ENCODE measurements at regions of chr11 and their contacts with region 1.

Region 1: DNA sequence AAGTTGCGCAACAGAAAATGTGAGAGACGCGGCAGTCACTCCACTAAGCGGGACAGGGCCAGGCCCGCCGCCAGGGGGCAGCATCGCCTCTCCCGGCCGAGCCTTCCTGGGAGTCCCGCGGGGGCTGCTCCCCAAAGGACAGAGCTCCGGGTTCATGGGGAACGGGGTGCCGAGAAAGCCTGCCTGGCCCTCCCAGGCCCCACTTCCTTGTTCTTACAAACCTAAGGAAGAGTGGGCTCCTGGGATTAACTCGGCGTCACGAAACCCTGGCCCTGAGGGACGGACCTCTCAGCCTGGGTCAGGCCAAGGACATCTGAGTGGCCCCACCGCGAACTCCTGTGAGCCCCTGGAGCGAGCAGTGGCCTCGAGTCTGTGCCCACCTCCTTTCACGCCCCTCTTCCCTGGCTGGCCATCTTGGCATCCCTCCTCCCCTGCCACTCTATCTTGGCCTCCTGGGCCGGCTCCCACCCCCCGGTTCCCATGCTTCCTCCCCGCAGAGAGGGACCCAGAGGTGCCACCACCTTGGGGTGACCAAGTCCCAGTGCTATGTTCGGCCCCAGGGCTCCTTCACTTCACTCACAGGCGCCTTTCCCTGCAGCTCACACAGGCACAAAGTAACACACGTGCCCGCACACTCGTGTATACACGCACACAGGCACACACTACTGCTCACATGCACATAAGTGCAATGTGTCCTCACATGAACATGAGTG is 99.9 kb upstream of the FGF3 start:
- DNase-seq: peak; percentile 41
- H3K4me3 ChIP-seq: no peak overlapping the region
- H3K27ac ChIP-seq: no peak overlapping the region
- H3K4me1 ChIP-seq: peaks cover 11% of the 10 kb centered on the region
- H3K27me3 ChIP-seq: peaks cover 1 to 10% of the 10 kb centered on the region in 2 experiments
- CTCF ChIP-seq: peak; percentile 91 to 97
- POLR2A ChIP-seq: no peak

Region 2: DNA sequence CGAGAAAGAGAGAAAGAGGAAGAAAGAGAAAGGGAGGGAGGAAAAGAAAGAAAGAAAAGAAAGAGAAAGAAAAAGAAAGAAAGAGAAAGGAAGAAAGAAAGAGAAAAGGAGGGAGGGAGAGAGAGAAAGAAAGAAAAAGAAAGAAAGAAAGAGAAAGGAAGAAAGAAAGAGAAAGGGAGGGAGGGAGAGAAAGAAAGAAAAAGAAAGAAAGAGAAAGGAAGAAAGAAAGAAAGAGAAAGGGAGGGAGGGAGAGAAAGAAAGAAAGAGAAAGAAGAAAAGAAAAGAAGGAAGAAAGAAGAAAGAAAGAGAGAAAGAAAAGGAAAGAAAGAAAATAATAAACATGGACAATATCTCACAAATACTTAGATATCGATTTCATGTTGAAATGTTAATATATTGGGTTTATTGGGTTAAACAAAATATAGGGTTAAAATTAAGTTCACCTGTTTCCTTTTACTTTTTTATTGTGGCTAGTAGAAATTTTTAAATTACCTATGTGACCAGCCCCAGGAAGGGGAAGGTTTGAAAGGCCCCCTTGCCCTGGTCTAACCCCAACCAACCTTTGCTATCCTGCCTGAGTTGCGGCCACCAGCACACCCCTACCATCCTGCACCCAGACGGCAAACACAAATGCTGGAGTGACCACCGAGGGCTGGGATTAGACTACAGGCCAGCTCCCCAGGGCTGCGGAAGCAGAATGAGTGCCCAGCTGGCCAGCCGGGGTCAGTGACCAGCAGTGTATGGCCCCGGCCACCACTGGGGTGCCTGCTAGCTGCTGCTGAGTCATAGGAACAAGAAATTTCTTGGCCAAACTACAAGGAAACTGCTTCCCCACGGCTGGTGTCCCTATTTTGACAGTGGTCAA is 18.9 kb before region 1 on chr11:
- CTCF ChIA-PET with region 1: interaction called, 35 read pairs
- POLR2A ChIA-PET with region 1: no interaction called
- dilution Hi-C with region 1: no loop called
- intact Hi-C with region 1: no loop called
- DNase-seq: peak; percentile 67
- H3K4me3 ChIP-seq: no peak overlapping the region
- H3K27ac ChIP-seq: no peak overlapping the region
- H3K4me1 ChIP-seq: peaks cover 13% of the 10 kb centered on the region
- H3K27me3 ChIP-seq: peaks cover 0 to 7% of the 10 kb centered on the region in 2 experiments
- CTCF ChIP-seq: no peak
- POLR2A ChIP-seq: no peak

Region 3: GRCh38 chr11:69972351-69972802 is 53.3 kb after region 1 on chr11:
- CTCF ChIA-PET with region 1: no interaction called
- POLR2A ChIA-PET with region 1: no interaction called
- dilution Hi-C with region 1: no loop called
- intact Hi-C with region 1: no loop called
- DNase-seq: no peak
- H3K4me3 ChIP-seq: no peak overlapping the region
- H3K27ac ChIP-seq: no peak overlapping the region
- H3K4me1 ChIP-seq: peaks cover 8% of the 10 kb centered on the region
- H3K27me3 ChIP-seq: no peaks in the 10 kb centered on the region
- CTCF ChIP-seq: no peak
- POLR2A ChIP-seq: no peak

Region 4: GRCh38 chr11:70082829-70083228 is 163.7 kb after region 1 on chr11:
- CTCF ChIA-PET with region 1: interaction called, 24 read pairs
- POLR2A ChIA-PET with region 1: no interaction called
- dilution Hi-C with region 1: no loop called
- intact Hi-C with region 1: loop called (anchors 2 kb)
- DNase-seq: peak; percentile 3
- H3K4me3 ChIP-seq: no peak overlapping the region
- H3K27ac ChIP-seq: no peak overlapping the region
- H3K4me1 ChIP-seq: no peaks in the 10 kb centered on the region
- H3K27me3 ChIP-seq: peaks cover 11 to 19% of the 10 kb centered on the region in 2 experiments
- CTCF ChIP-seq: peak; percentile 7 to 33
- POLR2A ChIP-seq: no peak

Region 5: DNA sequence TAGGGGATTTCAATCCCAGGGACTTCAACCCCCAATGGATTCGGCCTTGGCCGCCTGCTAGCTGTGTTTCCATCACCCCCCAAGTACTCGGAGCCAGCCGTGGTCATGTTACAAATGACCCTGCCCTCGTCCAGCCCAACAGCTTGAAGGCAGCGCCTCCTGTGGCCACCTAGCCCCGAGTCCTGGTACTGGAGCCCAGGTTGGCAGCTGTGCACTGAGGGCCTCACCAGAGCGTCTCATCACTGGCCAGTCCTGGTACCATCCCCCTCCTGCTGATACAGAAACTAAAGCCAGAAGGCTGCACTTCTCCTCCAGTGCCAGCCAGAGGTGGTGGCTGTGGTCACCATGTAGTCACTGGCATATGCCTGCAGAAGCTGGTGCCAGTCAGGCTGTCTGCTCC is 239.1 kb after region 1 on chr11:
- CTCF ChIA-PET with region 1: interaction called, 10 read pairs
- POLR2A ChIA-PET with region 1: no interaction called
- dilution Hi-C with region 1: no loop called
- intact Hi-C with region 1: no loop called
- DNase-seq: no peak
- H3K4me3 ChIP-seq: no peak overlapping the region
- H3K27ac ChIP-seq: no peak overlapping the region
- H3K4me1 ChIP-seq: no peaks in the 10 kb centered on the region
- H3K27me3 ChIP-seq: no peaks in the 10 kb centered on the region
- CTCF ChIP-seq: peak in 1 of 2 donors; percentile 32
- POLR2A ChIP-seq: no peak

Region 6: DNA sequence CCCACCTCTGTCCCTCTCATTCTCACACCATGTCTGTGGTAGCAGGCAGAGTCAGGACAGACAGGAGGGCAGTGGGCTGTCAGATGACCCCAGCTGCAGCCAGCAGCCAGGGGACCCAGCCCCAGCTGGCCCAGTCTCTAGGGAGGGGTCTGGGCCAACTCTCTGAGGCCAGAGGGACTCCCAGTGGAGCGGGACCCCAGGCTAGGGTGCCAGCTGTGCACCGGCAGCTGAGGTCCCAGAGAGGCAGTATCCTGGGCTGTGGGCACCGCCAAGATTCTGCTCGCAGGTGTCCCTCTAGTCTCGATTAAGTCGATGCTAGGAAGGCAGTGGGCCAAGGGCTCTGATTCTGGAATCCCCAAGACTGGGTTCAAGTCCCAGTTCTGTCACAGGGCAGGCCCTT is 267.3 kb after region 1 on chr11:
- CTCF ChIA-PET with region 1: interaction called, 53 read pairs
- POLR2A ChIA-PET with region 1: no interaction called
- dilution Hi-C with region 1: loop called (anchors 25 kb)
- intact Hi-C with region 1: loop called (anchors 1 kb)
- DNase-seq: no peak
- H3K4me3 ChIP-seq: no peak overlapping the region
- H3K27ac ChIP-seq: no peak overlapping the region
- H3K4me1 ChIP-seq: no peaks in the 10 kb centered on the region
- H3K27me3 ChIP-seq: no peaks in the 10 kb centered on the region
- CTCF ChIP-seq: no peak
- POLR2A ChIP-seq: no peak

Region 7: GRCh38 chr11:70202898-70203748 is 284.0 kb after region 1 on chr11 and contains the start of gene FADD:
- CTCF ChIA-PET with region 1: interaction called, 70 read pairs
- POLR2A ChIA-PET with region 1: interaction called, 12 read pairs
- dilution Hi-C with region 1: loop called (anchors 25 kb)
- intact Hi-C with region 1: no loop called
- DNase-seq: peak; percentile 96
- H3K4me3 ChIP-seq: peak within 1 kb of the TSS; percentile 79 to 86 (median 86)
- H3K27ac ChIP-seq: peak within 1 kb of the TSS; percentile 98
- H3K4me1 ChIP-seq: peaks cover 13% of the 10 kb centered on the region
- H3K27me3 ChIP-seq: no peaks in the 10 kb centered on the region
- CTCF ChIP-seq: no peak
- POLR2A ChIP-seq: peak; percentile 93
- total RNA-seq, gene FADD: 42.5 and 45.1 TPM in 2 replicates